ENCODE measurements at regions of chr12 and their contacts with region 1.

Region 1: DNA sequence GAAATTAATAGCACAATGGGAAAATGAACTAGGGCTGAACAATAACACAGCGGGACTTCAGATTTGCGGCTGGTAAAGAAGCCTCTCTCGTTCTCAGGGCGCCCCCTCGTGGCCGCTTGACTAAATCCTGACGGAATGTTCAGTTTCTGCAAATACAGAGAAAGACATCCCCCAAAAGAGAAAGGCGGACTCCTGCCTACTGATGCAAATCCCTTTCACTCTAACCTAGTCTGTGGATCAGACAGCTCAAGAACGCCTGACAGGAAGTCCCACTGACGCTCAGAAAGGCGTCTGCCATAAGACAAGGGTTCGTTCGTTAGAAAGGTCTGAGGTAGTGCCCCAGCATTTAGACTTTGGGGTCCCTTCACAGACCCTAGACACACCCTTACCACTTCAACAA is 2.5 kb downstream of the NUAK1 start:
- DNase-seq: peak; percentile 57 to 78 (median 64)
- ATAC-seq: peak; percentile 83
- H3K4me3 ChIP-seq: no peak overlapping the region
- H3K27ac ChIP-seq: no peak overlapping the region
- H3K4me1 ChIP-seq: no peaks in the 10 kb centered on the region; a peak in 1 of 5 replicates
- H3K27me3 ChIP-seq: peaks cover 2 to 14% of the 10 kb centered on the region in 2 experiments; a peak in 4 of 5 replicates
- CTCF ChIP-seq: peak; percentile 74 to 83 (median 76)
- EP300 ChIP-seq: no peak
- POLR2A ChIP-seq: no peak
- RAD21 ChIP-seq: peak; percentile 90

Region 2: DNA sequence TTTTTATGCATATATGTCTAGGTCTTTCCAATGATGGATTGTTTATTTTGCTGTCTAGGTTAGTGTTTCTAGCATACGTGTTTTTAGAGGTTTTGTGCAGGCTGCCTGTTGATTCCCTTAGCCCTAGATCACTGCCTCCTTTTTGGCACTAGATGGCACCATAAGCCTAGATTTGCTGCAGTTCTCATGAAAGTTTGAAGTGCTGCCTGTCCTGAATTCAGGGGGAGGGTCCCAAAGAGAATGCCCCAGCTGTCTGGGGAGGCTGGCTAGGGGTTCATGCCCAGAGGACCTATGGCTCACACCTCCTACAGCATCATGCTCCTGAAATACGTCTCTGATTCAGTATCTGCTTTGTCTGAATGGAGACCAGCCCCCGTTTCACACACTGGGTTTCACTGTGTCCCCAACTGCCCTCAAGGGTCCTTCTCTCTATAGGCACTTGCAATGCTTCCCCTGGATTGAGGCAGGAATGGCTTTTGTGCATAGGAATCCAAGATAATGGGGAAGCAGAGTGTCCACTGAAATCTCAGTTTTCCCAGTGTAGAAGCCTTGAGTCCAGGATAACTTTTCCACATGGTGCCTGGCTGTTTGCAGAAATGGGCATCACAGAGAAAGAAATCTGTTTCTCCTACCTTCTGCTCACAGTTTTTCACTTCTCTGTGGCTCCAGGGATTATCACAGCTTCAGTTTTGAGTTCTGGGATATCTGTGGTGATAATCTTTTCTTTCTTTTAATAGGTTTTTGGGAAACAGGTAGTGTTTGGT is 1934.8 kb before region 1 on chr12:
- CTCF ChIA-PET with region 1: no interaction called
- POLR2A ChIA-PET with region 1: no interaction called
- in situ Hi-C with region 1: no loop called
- intact Hi-C with region 1: loop called (anchors 10 kb)
- DNase-seq: peak; percentile 61 to 71 (median 63)
- ATAC-seq: peak; percentile 91
- H3K4me3 ChIP-seq: no peak overlapping the region
- H3K27ac ChIP-seq: no peak overlapping the region
- H3K4me1 ChIP-seq: no peaks in the 10 kb centered on the region
- H3K27me3 ChIP-seq: peaks cover 0 to 8% of the 10 kb centered on the region in 2 experiments; a peak in 2 of 5 replicates
- CTCF ChIP-seq: peak; percentile 76 to 90 (median 88)
- EP300 ChIP-seq: no peak
- POLR2A ChIP-seq: no peak
- RAD21 ChIP-seq: peak; percentile 90 to 93

Region 3: DNA sequence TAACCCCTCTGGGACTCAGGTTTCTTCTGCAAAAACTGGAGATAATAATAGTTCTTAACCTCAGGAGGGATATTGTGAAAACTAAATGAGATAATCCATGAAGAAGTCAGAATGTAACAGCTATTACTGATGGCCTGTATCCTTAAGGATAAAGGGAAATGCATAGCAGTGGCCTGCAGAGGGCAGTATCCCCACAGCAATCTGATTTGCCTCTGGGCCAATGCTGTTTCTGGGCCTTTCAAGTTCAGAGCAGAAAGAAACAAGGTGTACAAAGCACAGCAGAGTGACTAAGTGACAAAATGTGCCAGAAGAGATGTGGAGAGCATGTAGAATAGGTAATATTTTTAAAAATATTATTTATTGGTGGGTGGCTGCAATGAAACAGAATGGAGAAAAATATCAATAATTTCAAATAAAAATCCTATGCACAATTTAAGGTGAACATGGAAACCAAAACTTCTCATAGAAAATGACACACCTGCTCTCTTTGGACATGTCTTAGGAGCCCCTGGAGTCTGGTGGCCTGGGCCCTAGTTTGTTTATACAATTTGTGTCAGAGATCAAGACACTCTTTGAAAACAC is 715.5 kb before region 1 on chr12:
- CTCF ChIA-PET with region 1: interaction called, 33 read pairs
- POLR2A ChIA-PET with region 1: interaction called, 4 read pairs
- in situ Hi-C with region 1: loop called (anchors 5 kb)
- intact Hi-C with region 1: loop called (anchors 1 kb)
- DNase-seq: peak; percentile 67 to 71 (median 70)
- ATAC-seq: peak; percentile 90
- H3K4me3 ChIP-seq: no peak overlapping the region
- H3K27ac ChIP-seq: no peak overlapping the region
- H3K4me1 ChIP-seq: no peaks in the 10 kb centered on the region
- H3K27me3 ChIP-seq: no peaks in the 10 kb centered on the region
- CTCF ChIP-seq: peak; percentile 77 to 90 (median 82)
- EP300 ChIP-seq: no peak
- POLR2A ChIP-seq: no peak
- RAD21 ChIP-seq: peak; percentile 94

Region 4: GRCh38 chr12:105705765-105706164 is 430.5 kb before region 1 on chr12:
- CTCF ChIA-PET with region 1: interaction called, 5 read pairs
- POLR2A ChIA-PET with region 1: interaction called, 3 read pairs
- in situ Hi-C with region 1: no loop called
- intact Hi-C with region 1: loop called (anchors 1 kb)
- DNase-seq: peak; percentile 25 to 60 (median 31)
- ATAC-seq: peak; percentile 48; the same call in 2 of the 3 replicates
- H3K4me3 ChIP-seq: no peak overlapping the region
- H3K27ac ChIP-seq: no peak overlapping the region
- H3K4me1 ChIP-seq: no peaks in the 10 kb centered on the region
- H3K27me3 ChIP-seq: no peaks in the 10 kb centered on the region; a peak in 1 of 5 replicates
- CTCF ChIP-seq: peak; percentile 48 to 75 (median 74); a peak in 5 of 6 replicates
- EP300 ChIP-seq: no peak
- POLR2A ChIP-seq: no peak
- RAD21 ChIP-seq: peak; percentile 46 to 69; a peak in 3 of 4 replicates

Region 5: GRCh38 chr12:105948331-105948730 is 187.9 kb before region 1 on chr12:
- CTCF ChIA-PET with region 1: no interaction called
- POLR2A ChIA-PET with region 1: no interaction called
- in situ Hi-C with region 1: no loop called
- intact Hi-C with region 1: loop called (anchors 10 kb)
- DNase-seq: no peak
- ATAC-seq: no peak
- H3K4me3 ChIP-seq: no peak overlapping the region
- H3K27ac ChIP-seq: no peak overlapping the region
- H3K4me1 ChIP-seq: no peaks in the 10 kb centered on the region; a peak in 1 of 5 replicates
- H3K27me3 ChIP-seq: no peaks in the 10 kb centered on the region
- CTCF ChIP-seq: no peak
- EP300 ChIP-seq: no peak
- POLR2A ChIP-seq: no peak
- RAD21 ChIP-seq: no peak

Region 6: DNA sequence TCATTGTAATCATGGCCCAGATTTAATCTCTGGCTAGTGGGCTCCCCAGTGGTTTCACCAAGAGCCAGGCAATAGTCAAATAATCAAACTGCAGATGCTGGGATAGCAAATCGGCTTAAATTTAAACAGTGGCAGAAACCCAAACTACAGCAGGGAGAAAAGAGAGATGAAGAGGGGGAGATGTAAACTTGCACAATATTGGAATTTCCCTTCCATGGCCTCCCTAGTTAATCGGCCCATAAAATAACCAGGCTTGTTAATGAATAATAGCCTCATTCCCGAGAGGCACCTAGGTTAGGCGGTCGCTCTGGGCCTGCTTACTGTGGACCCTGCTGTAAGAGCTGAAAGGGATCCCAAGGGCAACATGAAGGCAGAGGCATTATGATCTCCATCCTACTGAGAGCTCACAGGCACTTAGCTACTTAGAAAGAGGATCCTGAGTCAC is 113.7 kb before region 1 on chr12:
- CTCF ChIA-PET with region 1: no interaction called
- POLR2A ChIA-PET with region 1: no interaction called
- in situ Hi-C with region 1: no loop called
- intact Hi-C with region 1: loop called (anchors 10 kb)
- DNase-seq: no peak
- ATAC-seq: no peak
- H3K4me3 ChIP-seq: no peak overlapping the region
- H3K27ac ChIP-seq: no peak overlapping the region
- H3K4me1 ChIP-seq: no peaks in the 10 kb centered on the region
- H3K27me3 ChIP-seq: no peaks in the 10 kb centered on the region; a peak in 1 of 5 replicates
- CTCF ChIP-seq: no peak
- EP300 ChIP-seq: no peak
- POLR2A ChIP-seq: no peak
- RAD21 ChIP-seq: no peak

Region 7: GRCh38 chr12:106211973-106212372 is 75.7 kb after region 1 on chr12:
- CTCF ChIA-PET with region 1: no interaction called
- POLR2A ChIA-PET with region 1: no interaction called
- in situ Hi-C with region 1: no loop called
- intact Hi-C with region 1: no loop called
- DNase-seq: no peak
- ATAC-seq: no peak
- H3K4me3 ChIP-seq: no peak overlapping the region
- H3K27ac ChIP-seq: no peak overlapping the region
- H3K4me1 ChIP-seq: no peaks in the 10 kb centered on the region
- H3K27me3 ChIP-seq: peaks cover 0 to 13% of the 10 kb centered on the region in 2 experiments; a peak in 2 of 5 replicates
- CTCF ChIP-seq: no peak
- EP300 ChIP-seq: no peak
- POLR2A ChIP-seq: no peak
- RAD21 ChIP-seq: no peak